WTC11 (cell line): ENCODE measurements at regions of chr15 and their contacts with region 1.

Region 1: DNA sequence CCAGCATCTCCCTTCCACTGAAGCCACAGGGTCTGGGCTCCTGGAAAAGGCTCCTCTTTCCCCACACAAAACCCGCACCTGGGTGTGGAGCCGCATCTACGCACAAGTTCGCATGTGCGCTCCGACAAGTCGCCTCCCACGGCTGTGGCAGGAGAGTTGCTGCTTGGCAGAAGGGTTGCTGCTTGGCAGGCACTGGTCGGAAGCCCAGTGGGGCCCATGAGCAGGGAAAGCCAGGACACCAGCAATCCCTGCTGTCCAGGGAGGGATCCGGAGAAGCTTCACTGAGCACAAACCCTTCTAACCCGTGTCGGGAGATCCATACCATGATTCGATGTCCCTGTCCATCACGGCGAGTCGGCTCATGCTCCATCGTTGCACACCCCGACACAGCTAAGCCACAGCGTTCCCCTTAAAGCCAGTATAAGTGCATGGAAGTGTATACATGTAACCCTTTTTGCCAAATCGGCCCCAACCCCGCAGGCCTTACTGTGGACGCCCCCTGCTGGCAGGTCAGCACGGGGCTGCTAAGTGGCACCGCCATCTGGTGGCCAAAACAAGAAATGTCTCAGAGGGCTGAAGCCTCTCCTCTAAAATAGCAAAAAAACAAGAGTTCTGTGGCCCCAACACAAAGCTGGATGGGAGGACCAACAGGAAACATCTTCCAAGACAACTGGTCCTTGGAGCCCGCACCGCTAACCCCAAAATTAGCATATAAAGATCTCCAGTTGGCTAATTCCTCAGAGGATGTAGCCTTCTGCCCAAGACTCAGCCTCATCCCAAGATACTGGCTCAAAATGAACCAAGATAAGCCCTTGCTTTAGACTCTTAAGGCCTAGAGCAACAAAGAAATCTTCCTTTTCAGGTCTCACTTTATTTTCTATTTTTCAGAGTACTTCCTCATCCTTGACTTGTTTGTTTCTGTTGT is 8.3 kb downstream of the ANKRD63 start:
- DNase-seq: peak; percentile 88
- ATAC-seq: peak; percentile 35
- H3K4me3 Mint-ChIP-seq: no peak overlapping the region
- H3K27ac Mint-ChIP-seq: peak overlapping the region; percentile 79; the same call in 1 of the 2 replicates
- H3K4me1 Mint-ChIP-seq: peaks cover 25% of the 10 kb centered on the region
- H3K27me3 Mint-ChIP-seq: peaks cover 17% of the 10 kb centered on the region
- CTCF ChIP-seq: peak; percentile 100

Region 2: DNA sequence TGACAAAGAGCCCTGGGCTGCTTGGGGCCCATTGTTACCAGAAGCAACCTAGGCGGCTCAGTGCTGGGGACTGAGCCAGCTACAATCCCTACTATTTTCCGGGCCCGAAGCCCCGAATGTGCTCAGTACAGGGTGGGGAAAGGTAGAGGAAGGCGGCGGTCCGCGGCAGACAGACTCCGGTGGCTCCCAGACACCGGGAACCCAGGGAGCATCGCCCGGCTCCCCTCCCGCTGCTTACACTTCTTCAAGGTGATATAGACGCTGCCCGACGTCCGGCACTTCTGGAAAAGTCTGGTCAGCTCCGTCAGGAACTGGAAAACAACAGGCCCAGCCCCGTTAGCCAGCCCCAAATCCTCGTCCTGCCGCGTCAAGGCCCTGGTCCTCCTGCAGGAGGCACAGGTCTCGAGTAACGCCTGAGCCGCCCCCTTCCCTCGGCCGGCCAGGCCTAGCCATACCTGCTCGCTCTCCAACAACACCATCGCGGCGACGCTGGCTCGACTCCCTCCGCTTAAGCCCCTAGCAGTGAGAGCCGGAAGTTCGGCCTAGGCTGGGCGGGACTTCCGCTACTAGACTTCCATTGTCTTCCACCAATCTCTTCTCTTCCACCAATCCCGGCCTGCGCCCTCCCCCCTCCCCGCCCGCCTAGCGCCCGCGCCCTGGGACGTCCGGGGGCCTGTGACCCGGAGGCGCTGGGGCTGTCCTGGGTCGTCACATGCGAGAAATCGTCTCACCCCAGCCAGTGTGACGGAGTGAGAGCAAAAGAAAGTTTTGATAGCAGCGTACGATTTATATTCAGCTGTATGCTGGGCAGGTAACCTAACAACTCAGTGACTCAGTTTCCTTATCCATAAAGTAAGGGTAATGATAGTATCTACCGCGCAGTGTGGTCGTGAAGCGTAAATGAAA is 235.7 kb before region 1 on chr15 and contains the start of gene SRP14:
- CTCF ChIA-PET with region 1: interaction called, 97 read pairs
- POLR2A ChIA-PET with region 1: no interaction called
- DNase-seq: peak; percentile 95
- ATAC-seq: peak; percentile 97
- H3K4me3 Mint-ChIP-seq: peak within 1 kb of the TSS; percentile 90
- H3K27ac Mint-ChIP-seq: peak within 1 kb of the TSS; percentile 96
- H3K4me1 Mint-ChIP-seq: peaks cover 20% of the 10 kb centered on the region
- H3K27me3 Mint-ChIP-seq: no peaks in the 10 kb centered on the region
- CTCF ChIP-seq: no peak
- total RNA-seq, gene SRP14: 190 to 199 TPM (median 192 TPM) in 3 replicates

Region 3: DNA sequence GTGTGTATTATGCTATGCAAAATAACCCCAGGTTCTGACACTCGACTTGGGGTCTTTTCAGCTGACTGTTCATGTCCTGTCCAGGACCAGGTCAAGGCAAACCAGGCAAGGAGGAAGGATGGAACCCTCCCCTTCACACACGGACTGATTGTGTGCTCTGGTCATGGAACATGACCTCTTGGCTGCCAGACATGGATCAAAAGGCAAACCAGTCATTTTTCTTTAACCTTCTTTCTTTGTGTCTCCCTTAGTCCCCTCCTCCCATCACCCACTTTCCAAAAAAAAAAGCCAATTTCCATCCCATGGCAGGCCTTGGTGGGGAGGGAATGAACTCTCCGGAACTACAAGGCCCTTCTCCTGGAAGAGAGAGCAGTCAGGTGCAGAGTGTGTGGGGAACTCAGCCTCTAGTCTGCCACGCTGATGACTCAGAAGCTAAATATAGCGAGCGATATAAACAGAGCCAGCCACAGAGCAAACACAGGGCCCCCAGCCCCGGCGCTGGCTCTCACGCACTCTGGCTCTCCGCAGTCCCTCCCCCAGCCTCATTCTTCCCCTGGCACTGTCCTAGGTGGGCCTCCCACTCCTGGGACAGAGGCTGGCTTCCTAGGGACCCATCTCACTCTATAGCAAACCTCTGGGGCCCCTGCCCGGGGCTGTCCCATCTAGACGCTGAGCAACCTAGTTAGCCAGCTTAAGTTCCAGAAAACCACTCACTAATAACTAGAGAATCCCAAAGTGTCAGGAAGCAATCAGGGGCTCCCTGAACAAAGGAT is 175.9 kb before region 1 on chr15:
- CTCF ChIA-PET with region 1: interaction called, 15 read pairs
- POLR2A ChIA-PET with region 1: no interaction called
- DNase-seq: no peak
- ATAC-seq: peak; percentile 2; the same call in 1 of the 2 replicates
- H3K4me3 Mint-ChIP-seq: no peak overlapping the region
- H3K27ac Mint-ChIP-seq: peak overlapping the region; percentile 90; the same call in 1 of the 2 replicates
- H3K4me1 Mint-ChIP-seq: peaks cover 78% of the 10 kb centered on the region
- H3K27me3 Mint-ChIP-seq: no peaks in the 10 kb centered on the region
- CTCF ChIP-seq: no peak

Region 4: GRCh38 chr15:40232625-40233070 is 42.0 kb before region 1 on chr15:
- CTCF ChIA-PET with region 1: interaction called, 273 read pairs
- POLR2A ChIA-PET with region 1: interaction called, 4 read pairs
- DNase-seq: no peak
- ATAC-seq: peak; percentile 15; the same call in 1 of the 2 replicates
- H3K4me3 Mint-ChIP-seq: no peak overlapping the region
- H3K27ac Mint-ChIP-seq: peak overlapping the region; percentile 63
- H3K4me1 Mint-ChIP-seq: no peaks in the 10 kb centered on the region
- H3K27me3 Mint-ChIP-seq: no peaks in the 10 kb centered on the region
- CTCF ChIP-seq: no peak

Region 5: GRCh38 chr15:40290918-40291574 is 16.4 kb after region 1 on chr15:
- CTCF ChIA-PET with region 1: interaction called, 140 read pairs
- POLR2A ChIA-PET with region 1: interaction called, 5 read pairs
- DNase-seq: peak; percentile 69
- ATAC-seq: peak; percentile 76
- H3K4me3 Mint-ChIP-seq: peak overlapping the region; percentile 56
- H3K27ac Mint-ChIP-seq: no peak overlapping the region
- H3K4me1 Mint-ChIP-seq: peaks cover 18% of the 10 kb centered on the region
- H3K27me3 Mint-ChIP-seq: peaks cover 42% of the 10 kb centered on the region
- CTCF ChIP-seq: no peak

Region 6: GRCh38 chr15:40330368-40330836 is 55.8 kb after region 1 on chr15:
- CTCF ChIA-PET with region 1: interaction called, 181 read pairs
- POLR2A ChIA-PET with region 1: no interaction called
- DNase-seq: no peak
- ATAC-seq: no peak
- H3K4me3 Mint-ChIP-seq: no peak overlapping the region
- H3K27ac Mint-ChIP-seq: no peak overlapping the region
- H3K4me1 Mint-ChIP-seq: peaks cover 55% of the 10 kb centered on the region
- H3K27me3 Mint-ChIP-seq: peaks cover under 1% of the 10 kb centered on the region; the same call in 1 of the 2 replicates
- CTCF ChIP-seq: no peak

Region 7: DNA sequence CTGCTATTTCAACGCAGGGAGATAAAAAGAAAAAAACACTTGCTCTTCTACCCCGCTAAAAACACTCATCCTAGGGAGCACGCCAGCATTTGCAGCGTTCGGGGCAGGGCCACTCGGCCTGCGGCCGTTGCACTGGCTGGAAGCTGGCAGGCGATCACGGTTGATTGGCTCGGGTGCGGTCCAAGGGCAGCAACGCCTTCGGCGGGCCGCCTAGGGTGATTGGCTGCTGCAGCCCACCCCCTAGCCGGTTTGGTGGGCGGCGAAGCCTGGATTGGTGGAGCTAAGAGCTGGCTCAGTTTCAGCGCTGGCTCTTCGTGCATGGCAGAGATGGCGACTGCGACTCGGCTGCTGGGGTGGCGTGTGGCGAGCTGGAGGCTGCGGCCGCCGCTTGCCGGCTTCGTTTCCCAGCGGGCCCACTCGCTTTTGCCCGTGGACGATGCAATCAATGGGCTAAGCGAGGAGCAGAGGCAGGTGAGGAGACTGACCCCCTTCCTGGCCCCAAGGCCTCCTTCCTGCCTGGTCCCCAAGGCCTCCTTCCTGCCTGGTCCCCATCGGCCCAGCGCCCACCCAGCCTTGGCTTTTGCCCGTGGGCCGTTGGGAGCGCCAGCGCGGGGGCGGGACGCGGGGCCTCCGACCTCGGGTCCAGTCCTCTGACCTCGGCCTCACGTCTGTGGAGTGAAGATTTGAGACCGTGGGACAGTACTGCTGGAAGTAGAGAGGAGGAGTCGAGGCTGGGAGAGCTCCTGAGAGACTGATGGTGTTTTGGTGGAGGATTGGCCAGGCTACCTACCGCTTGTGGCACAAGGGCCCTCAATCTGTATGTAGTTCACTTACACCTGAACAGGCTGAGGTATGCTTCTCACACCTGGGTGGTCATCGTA is 131.1 kb after region 1 on chr15 and contains the start of gene IVD:
- CTCF ChIA-PET with region 1: interaction called, 11 read pairs
- POLR2A ChIA-PET with region 1: no interaction called
- DNase-seq: peak; percentile 95
- ATAC-seq: peak; percentile 100
- H3K4me3 Mint-ChIP-seq: peak within 1 kb of the TSS; percentile 88
- H3K27ac Mint-ChIP-seq: peak within 1 kb of the TSS; percentile 96
- H3K4me1 Mint-ChIP-seq: peaks cover 17% of the 10 kb centered on the region
- H3K27me3 Mint-ChIP-seq: no peaks in the 10 kb centered on the region
- CTCF ChIP-seq: no peak
- total RNA-seq, gene IVD: 82.2 to 96.1 TPM (median 89.3 TPM) in 3 replicates